ENCODE measurements at regions of chr10 and their contacts with region 1.

Region 1: GRCh38 chr10:67884313-67884841 is at the start of gene SIRT1:
- DNase-seq: peak; percentile 94
- ATAC-seq: peak; percentile 81
- H3K4me3 Mint-ChIP-seq: peak within 1 kb of the TSS; percentile 91
- H3K27ac Mint-ChIP-seq: peak within 1 kb of the TSS; percentile 89
- H3K4me1 Mint-ChIP-seq: peaks cover 17% of the 10 kb centered on the region
- H3K27me3 Mint-ChIP-seq: peaks cover 2% of the 10 kb centered on the region
- total RNA-seq, gene SIRT1: 31.6 to 31.7 TPM

Region 2: GRCh38 chr10:67788025-67788886 is 96.1 kb before region 1 on chr10:
- POLR2A ChIA-PET with region 1: interaction called, 10 read pairs
- DNase-seq: peak; percentile 85
- ATAC-seq: peak; percentile 62
- H3K4me3 Mint-ChIP-seq: peak overlapping the region; percentile 71
- H3K27ac Mint-ChIP-seq: peak overlapping the region; percentile 83
- H3K4me1 Mint-ChIP-seq: peaks cover 43% of the 10 kb centered on the region
- H3K27me3 Mint-ChIP-seq: no peaks in the 10 kb centered on the region

Region 3: DNA sequence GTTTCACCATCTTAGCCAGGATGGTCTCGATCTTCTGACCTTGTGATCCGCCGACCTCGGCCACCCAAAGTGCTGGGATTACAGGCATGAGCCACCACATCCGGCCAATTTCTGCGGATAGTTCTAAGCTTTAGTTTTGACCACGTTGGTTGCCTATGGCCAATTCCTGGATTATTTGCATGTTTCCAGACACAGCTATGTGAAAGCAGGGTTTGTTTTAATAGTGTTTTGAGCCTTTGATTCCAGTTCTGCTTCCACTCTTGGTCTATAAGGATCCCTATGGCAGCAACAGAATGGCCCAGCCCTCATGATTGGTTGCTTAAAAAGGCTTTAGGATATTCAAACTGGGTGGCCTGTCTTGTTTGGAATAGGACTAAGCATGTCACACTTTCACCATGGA is 19.2 kb after region 1 on chr10:
- POLR2A ChIA-PET with region 1: interaction called, 13 read pairs
- DNase-seq: no peak
- ATAC-seq: no peak
- H3K4me3 Mint-ChIP-seq: no peak overlapping the region
- H3K27ac Mint-ChIP-seq: no peak overlapping the region
- H3K4me1 Mint-ChIP-seq: no peaks in the 10 kb centered on the region
- H3K27me3 Mint-ChIP-seq: no peaks in the 10 kb centered on the region

Region 4: DNA sequence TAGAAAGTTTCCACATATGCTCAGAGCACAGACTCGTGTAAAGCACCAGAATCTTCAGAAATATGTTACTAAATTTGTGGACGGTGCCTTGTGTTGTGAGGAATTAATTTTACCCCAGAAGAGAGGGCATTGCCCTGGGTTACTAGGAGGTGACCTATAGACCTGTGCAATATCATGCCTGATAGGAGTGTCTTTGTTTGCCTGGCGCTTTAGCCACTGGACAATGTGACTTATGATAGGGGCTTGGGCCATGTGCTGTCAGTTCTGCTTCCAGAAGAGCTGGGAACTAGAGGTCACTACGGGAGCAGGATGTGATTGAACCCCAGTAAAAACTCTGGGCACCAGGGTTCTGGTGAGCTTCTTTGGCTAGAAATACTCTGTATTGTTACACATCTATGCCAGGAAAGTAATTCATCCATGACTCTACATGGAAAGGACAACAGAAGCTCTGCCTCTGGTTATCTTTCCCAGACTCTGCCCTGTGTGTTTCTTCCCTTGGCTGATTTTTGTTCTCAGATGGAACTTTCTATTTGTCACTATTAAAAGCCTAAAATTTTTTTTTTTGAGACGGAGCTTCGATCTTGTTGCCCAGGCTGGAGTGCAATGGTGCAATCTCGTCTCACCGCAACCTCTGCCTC is 75.6 kb after region 1 on chr10:
- POLR2A ChIA-PET with region 1: no interaction called
- DNase-seq: no peak
- ATAC-seq: no peak
- H3K4me3 Mint-ChIP-seq: no peak overlapping the region
- H3K27ac Mint-ChIP-seq: no peak overlapping the region
- H3K4me1 Mint-ChIP-seq: peaks cover 2% of the 10 kb centered on the region
- H3K27me3 Mint-ChIP-seq: no peaks in the 10 kb centered on the region

Region 5: DNA sequence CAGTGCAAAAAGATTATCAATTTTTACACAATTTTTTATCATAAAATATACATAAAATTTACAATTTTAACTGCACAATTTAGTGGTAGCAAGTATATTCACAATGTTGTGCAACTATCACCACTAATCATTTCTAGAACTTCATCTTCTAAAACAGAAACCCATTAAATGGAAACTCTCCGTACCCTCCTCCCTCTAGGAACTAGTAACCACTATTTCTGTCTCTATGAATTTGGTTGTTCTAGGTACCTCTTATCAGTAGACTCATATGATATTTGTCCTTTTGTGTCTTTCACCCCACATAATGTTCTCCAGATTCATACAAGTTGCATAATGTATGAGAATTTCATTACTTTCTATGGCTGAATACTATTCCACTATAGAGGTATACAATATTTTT is 117.2 kb after region 1 on chr10:
- POLR2A ChIA-PET with region 1: no interaction called
- DNase-seq: no peak
- ATAC-seq: no peak
- H3K4me3 Mint-ChIP-seq: no peak overlapping the region
- H3K27ac Mint-ChIP-seq: no peak overlapping the region
- H3K4me1 Mint-ChIP-seq: no peaks in the 10 kb centered on the region
- H3K27me3 Mint-ChIP-seq: no peaks in the 10 kb centered on the region